Right ventricle myocardium inferior (tissue), 1 donor: ENCODE measurements at regions of chr2 and their contacts with region 1.

Region 1: DNA sequence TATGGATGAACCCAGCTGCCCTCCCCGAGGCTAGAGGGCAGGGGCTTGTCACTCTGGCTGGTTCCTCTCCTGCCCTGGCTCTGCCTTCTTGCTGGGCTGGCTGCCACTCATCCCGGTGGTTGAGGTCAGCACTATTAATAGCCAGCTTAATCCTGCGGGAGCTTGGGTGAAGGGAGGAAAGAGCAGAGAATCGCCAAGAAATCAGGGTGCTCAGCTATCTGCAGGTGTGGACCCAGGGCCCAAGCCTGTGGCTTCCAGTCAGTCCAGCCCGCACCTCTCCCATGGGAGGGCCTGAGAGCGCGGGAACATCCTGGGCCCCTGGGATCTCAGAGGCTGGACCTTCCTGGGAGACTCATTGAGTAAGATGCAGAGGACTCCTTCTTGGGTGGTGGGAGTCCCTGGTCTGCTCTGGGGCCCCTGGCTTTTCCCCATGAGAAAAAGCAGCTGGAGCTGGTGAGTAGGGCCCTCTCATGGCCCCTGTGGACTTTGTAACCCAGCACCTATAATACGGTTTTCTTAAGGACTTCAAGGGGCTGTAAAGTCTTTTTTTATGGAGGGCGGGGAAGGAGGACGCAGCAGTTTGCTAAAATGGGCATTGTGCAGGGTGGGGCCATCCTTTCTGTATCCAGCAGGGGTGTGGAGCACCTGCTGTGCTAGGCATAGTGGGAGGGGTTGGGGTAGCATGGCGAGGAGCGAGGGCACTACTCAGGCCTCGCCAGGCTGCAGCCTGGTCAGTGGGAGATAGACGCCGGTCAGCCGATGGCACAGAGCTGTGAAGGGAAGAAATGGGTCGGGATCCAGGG is 27.4 kb upstream of the CNNM3 start:
- DNase-seq: peak; percentile 65
- ATAC-seq: peak; percentile 83

Region 2: GRCh38 chr2:96769814-96770213 is 18.8 kb before region 1 on chr2:
- intact Hi-C with region 1: loop called (anchors 2 kb)
- DNase-seq: peak; percentile 84
- ATAC-seq: peak; percentile 97